ENCODE measurements at regions of chr19 and their contacts with region 1.

Region 1: GRCh38 chr19:4638828-4639530 is at the start of gene TNFAIP8L1:
- DNase-seq: peak; percentile 84 to 97 (median 93)
- H3K4me3 ChIP-seq: peak within 1 kb of the TSS; percentile 42 to 82 (median 71)
- H3K27ac ChIP-seq: peak within 1 kb of the TSS in 47 of 59 donors; percentile 8 to 78 (median 57)
- H3K27me3 ChIP-seq: no peaks in the 10 kb centered on the region
- CTCF ChIP-seq: peak in 5 of 56 donors; percentile 11 to 19 (median 14)
- total RNA-seq, gene TNFAIP8L1: 6.5 to 31.1 (median 19.5) TPM

Region 2: GRCh38 chr19:4493104-4493912 is 145.7 kb before region 1 on chr19:
- intact Hi-C with region 1: no loop called
- DNase-seq: peak in 3 of 10 donors; percentile 43 to 71 (median 56)
- H3K4me3 ChIP-seq: peak overlapping the region in 12 of 59 donors; percentile 2 to 24 (median 12)
- H3K27ac ChIP-seq: peak overlapping the region in 49 of 59 donors; percentile 6 to 87 (median 59)
- H3K27me3 ChIP-seq: no peaks in the 10 kb centered on the region
- CTCF ChIP-seq: no peak

Region 3: GRCh38 chr19:4557971-4558941 is 80.7 kb before region 1 on chr19:
- intact Hi-C with region 1: loop called in 1 of 2 experiments (anchors 5 kb)
- DNase-seq: peak in 1 of 10 donors; percentile 56
- H3K4me3 ChIP-seq: peak overlapping the region in 45 of 59 donors; percentile 3 to 63 (median 41)
- H3K27ac ChIP-seq: peak overlapping the region in 16 of 59 donors; percentile 1 to 74 (median 29)
- H3K27me3 ChIP-seq: no peaks in the 10 kb centered on the region
- CTCF ChIP-seq: peak; percentile 72 to 100 (median 97)

Region 4: DNA sequence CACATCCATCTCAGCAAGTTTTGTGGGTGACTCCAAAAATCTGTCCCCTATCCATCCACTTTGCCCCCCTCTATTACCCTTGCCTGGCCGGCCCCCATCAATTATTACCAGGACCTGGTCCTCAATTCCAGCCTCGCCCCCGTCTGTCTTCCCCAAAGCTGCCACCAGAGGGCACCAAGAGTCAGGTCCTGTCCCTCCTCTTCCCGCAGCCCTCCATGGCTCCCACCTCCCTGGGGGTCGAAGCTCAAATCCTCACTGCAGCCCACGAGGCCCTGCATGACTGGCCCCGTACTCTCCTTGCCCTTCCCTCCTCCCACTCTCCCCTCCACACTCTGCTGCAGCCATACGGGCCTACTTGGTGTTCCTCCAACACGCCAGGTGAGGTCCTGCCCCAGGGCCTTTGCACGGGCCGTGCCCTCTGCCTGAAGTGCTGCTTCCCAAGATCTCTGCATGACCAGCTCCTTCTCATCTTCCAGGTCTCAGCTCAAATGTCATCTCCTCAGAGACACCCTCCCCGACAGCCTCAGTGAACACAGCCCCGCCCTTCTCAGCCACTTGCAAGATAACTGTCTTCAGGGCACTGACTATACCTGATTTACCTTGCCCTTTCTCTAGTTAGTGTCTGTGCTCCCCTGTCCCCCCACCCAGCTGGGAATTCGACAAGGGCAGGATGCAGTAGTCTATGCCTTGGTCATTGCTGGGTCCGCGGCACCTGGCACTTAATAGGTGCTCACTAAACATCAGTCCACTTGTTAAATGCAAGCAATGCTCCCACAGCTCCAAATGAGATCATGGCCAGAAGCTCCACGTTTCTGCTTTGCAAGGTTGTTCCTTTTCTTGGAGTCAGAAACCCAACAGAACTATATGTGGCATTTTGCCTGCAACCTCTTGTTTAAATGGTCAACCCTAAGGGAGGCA is 62.7 kb before region 1 on chr19:
- intact Hi-C with region 1: loop called (anchors 5 kb)
- DNase-seq: peak in 8 of 10 donors; percentile 44 to 66 (median 60)
- H3K4me3 ChIP-seq: no peak overlapping the region
- H3K27ac ChIP-seq: peak overlapping the region in 1 of 59 donors; percentile 12
- H3K27me3 ChIP-seq: peaks cover 0 to 13% (median 4%) of the 10 kb centered on the region in 45 donors
- CTCF ChIP-seq: peak in 55 of 56 donors; percentile 15 to 73 (median 61)

Region 5: GRCh38 chr19:5238700-5239099 is 599.7 kb after region 1 on chr19:
- intact Hi-C with region 1: no loop called
- DNase-seq: no peak
- H3K4me3 ChIP-seq: no peak overlapping the region
- H3K27ac ChIP-seq: no peak overlapping the region
- H3K27me3 ChIP-seq: no peaks in the 10 kb centered on the region
- CTCF ChIP-seq: no peak

Measured in dorsolateral prefrontal cortex (tissue), 120 donors.